ENCODE measurements at regions of chr6 and their contacts with region 1.

Region 1: GRCh38 chr6:152267967-152268845 is 369.0 kb downstream of the SYNE1 start:
- DNase-seq: no peak
- ATAC-seq: no peak
- H3K4me3 ChIP-seq: no peak overlapping the region
- H3K27ac ChIP-seq: no peak overlapping the region
- H3K4me1 ChIP-seq: peaks cover 9% of the 10 kb centered on the region
- H3K27me3 ChIP-seq: no peaks in the 10 kb centered on the region

Region 2: GRCh38 chr6:152129691-152130151 is 138.5 kb before region 1 on chr6:
- intact Hi-C with region 1: no loop called
- DNase-seq: peak; percentile 26 to 67 (median 64)
- ATAC-seq: peak; percentile 85 to 90
- H3K4me3 ChIP-seq: peak overlapping the region; percentile 9
- H3K27ac ChIP-seq: peak overlapping the region; percentile 78
- H3K4me1 ChIP-seq: no peaks in the 10 kb centered on the region
- H3K27me3 ChIP-seq: no peaks in the 10 kb centered on the region

Region 3: DNA sequence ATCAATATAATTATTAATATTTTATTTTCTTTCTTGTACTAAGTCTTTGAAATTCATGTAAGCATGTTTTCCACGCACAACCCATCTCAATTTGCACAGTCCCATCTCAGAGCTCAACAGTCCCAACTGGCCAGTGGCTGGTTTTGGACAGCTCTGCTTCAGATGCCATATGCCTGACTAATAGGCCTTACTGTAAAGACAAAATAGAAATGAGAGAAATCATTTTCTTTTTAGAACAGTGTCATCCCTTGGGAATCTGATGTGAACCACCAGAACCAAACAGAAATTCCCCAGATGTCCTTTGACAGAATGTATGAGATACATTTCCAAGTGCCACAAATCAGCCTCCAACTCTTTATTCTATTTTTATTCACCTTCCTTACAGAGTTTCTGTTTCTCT is 121.8 kb before region 1 on chr6:
- intact Hi-C with region 1: loop called in 1 of 4 experiments (anchors 10 kb)
- DNase-seq: no peak
- ATAC-seq: no peak
- H3K4me3 ChIP-seq: no peak overlapping the region
- H3K27ac ChIP-seq: no peak overlapping the region
- H3K4me1 ChIP-seq: no peaks in the 10 kb centered on the region
- H3K27me3 ChIP-seq: no peaks in the 10 kb centered on the region

Region 4: DNA sequence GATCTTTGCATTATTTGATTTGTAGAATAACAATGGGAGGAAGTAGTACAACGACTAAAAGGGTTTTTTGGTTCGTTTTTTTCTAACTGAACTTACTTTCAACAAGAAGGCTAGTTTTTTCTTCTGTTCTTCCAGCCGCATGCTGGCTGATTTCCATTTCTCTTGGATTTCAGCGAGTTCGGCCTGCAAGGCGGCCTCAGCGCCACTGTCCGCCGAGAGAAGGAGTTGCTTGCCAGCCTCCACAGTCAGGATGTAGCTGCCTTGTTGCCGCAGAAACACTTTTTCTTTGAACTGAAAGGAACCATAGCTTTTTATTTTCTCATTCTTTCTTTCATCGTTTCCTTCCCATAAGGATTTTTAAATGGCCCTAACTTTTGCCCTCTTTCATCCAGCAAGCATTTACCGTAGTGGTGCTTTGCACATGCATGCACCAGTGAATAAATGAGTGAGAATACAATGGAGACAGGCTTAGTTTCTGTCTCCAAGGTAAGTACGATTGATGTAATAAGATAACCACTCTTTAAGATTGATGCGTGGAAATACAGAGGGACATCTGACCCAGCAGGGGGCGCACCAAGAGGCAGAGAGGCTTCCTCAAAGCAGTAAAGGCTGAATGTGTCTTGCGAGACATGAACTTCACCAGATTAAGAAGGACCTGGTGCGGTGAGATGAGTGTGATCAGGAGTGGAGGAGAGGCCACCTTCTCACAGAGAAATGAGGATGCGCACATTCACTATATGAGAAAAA is 62.0 kb before region 1 on chr6:
- intact Hi-C with region 1: loop called in 1 of 4 experiments (anchors 10 kb)
- DNase-seq: peak; percentile 34 to 69 (median 63)
- ATAC-seq: no peak
- H3K4me3 ChIP-seq: no peak overlapping the region
- H3K27ac ChIP-seq: no peak overlapping the region
- H3K4me1 ChIP-seq: no peaks in the 10 kb centered on the region
- H3K27me3 ChIP-seq: no peaks in the 10 kb centered on the region

Measured in right cardiac atrium (tissue), 5 donors.